Activated B cell treated with CpG ODN at 0.5 μM for 24 hours (primary cell): ENCODE measurements at regions of chr2 and their contacts with region 1.

Region 1: GRCh38 chr2:157523270-157524247 is 79.7 kb upstream of the CYTIP start:
- DNase-seq: no peak
- ATAC-seq: peak; percentile 93
- H3K4me3 Mint-ChIP-seq: peak overlapping the region; percentile 17
- H3K27ac Mint-ChIP-seq: peak overlapping the region; percentile 24
- H3K4me1 Mint-ChIP-seq: peaks cover 31% of the 10 kb centered on the region
- H3K27me3 Mint-ChIP-seq: no peaks in the 10 kb centered on the region
- CTCF ChIP-seq: no peak

Region 2: DNA sequence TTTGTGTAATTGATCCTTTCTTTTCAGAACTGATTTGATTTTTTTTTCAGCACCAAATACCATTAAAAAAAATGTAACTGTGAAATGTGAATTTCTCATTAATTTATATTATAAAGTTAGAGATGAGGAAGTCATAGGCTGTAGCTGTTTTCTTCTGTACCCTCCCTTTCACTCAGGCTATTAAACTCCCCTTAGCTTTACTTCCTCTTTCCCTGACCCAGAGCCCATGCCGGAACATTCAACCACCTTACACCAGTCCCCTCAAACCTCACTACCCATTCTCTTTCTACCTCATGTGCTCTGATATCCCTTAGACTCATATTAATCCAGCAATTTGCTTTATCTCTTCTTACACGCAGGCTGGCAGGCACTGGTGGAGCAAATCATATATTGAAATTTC is 253.6 kb before region 1 on chr2:
- CTCF ChIA-PET with region 1: no interaction called
- POLR2A ChIA-PET with region 1: no interaction called
- intact Hi-C with region 1: no loop called
- DNase-seq: no peak
- ATAC-seq: peak; percentile 45
- H3K4me3 Mint-ChIP-seq: no peak overlapping the region
- H3K27ac Mint-ChIP-seq: no peak overlapping the region
- H3K4me1 Mint-ChIP-seq: peaks cover 5% of the 10 kb centered on the region
- H3K27me3 Mint-ChIP-seq: peaks cover 1% of the 10 kb centered on the region
- CTCF ChIP-seq: no peak

Region 3: GRCh38 chr2:157363612-157364101 is 159.9 kb before region 1 on chr2:
- CTCF ChIA-PET with region 1: no interaction called
- POLR2A ChIA-PET with region 1: no interaction called
- intact Hi-C with region 1: no loop called
- DNase-seq: no peak
- ATAC-seq: peak; percentile 52
- H3K4me3 Mint-ChIP-seq: peak overlapping the region; percentile 16
- H3K27ac Mint-ChIP-seq: peak overlapping the region; percentile 57
- H3K4me1 Mint-ChIP-seq: peaks cover 33% of the 10 kb centered on the region
- H3K27me3 Mint-ChIP-seq: no peaks in the 10 kb centered on the region
- CTCF ChIP-seq: no peak

Region 4: DNA sequence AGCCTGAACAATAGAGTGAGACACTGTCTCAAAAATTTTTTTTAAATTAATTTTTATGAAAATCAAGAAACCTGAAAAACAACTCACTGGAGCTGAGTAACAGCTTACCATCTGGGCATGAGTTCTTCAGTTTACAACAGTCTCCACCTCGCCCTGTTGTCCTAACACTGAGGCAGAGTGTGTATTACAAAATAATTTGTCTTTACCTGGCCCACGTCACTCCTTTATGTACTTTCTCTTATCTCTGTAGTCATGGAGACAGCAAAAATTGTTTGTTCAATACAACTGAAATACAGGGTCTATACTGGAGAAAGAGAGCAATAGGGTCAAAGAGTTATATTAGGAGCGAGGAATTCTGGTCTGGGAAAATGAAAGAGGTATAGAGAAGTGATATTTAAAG is 127.7 kb before region 1 on chr2:
- CTCF ChIA-PET with region 1: no interaction called
- POLR2A ChIA-PET with region 1: no interaction called
- intact Hi-C with region 1: no loop called
- DNase-seq: no peak
- ATAC-seq: no peak
- H3K4me3 Mint-ChIP-seq: no peak overlapping the region
- H3K27ac Mint-ChIP-seq: no peak overlapping the region
- H3K4me1 Mint-ChIP-seq: peaks cover 3% of the 10 kb centered on the region
- H3K27me3 Mint-ChIP-seq: no peaks in the 10 kb centered on the region
- CTCF ChIP-seq: no peak

Region 5: DNA sequence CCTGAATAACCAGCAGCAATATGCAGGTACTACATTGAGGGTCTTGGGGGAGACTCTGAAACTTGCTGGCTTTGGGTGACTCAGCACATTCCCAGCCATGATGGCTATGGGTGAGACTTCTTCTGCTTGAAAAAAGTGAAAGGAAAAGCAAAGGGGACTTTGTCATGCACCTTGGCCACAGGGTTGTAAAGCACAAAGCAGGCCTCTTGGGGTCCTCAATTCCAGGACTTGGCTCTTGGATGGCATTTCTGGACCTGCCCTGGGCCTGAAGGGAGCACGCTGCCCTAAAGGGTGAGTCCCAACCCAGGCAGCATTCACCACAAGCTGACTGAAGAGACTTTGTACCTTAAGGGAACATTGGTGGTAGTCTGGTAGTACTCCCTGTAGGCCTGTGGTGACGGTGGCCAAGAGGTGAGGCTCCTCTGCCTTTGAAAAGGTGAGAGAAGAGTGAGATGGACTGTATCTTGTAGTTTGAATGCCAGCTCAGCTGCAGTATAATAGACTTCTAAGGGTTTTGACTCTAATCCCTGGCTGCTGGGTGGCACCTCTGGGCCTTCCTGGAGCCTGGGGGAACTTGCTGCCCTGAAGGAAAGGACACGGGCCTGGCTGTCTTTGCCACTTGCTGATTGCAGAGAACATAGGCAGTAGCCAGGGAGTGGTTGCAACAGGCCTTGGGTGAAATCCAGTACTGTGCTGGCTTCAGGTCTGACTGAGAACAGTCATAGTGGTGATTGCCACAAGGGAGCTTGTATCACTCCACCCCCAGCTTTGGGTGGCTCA is 43.2 kb before region 1 on chr2:
- CTCF ChIA-PET with region 1: no interaction called
- POLR2A ChIA-PET with region 1: no interaction called
- intact Hi-C with region 1: no loop called
- DNase-seq: no peak
- ATAC-seq: no peak
- H3K4me3 Mint-ChIP-seq: no peak overlapping the region
- H3K27ac Mint-ChIP-seq: peak overlapping the region; percentile 30
- H3K4me1 Mint-ChIP-seq: peaks cover 22% of the 10 kb centered on the region
- H3K27me3 Mint-ChIP-seq: no peaks in the 10 kb centered on the region
- CTCF ChIP-seq: no peak

Region 6: DNA sequence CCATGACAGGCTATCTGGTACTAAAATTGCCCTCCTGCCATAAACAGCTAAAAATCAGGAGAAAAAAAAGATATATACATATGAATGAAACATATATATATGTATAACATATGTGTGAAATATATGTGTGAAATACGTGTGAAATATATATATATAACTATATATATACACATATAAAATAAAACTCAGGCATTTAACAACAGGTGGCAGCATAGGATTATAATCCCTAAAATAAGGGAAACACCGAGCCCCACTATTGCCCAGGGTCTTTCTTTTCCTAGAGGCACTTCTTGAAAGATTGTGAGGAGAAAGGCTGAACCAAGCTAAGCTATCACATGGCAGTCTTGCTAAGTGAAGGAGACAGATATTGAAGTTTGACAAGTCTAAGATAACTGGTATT is 13.8 kb before region 1 on chr2:
- CTCF ChIA-PET with region 1: interaction called, 3 read pairs
- POLR2A ChIA-PET with region 1: no interaction called
- intact Hi-C with region 1: loop called (anchors 2 kb)
- DNase-seq: no peak
- ATAC-seq: no peak
- H3K4me3 Mint-ChIP-seq: no peak overlapping the region
- H3K27ac Mint-ChIP-seq: no peak overlapping the region
- H3K4me1 Mint-ChIP-seq: peaks cover 6% of the 10 kb centered on the region
- H3K27me3 Mint-ChIP-seq: peaks cover 10% of the 10 kb centered on the region
- CTCF ChIP-seq: no peak

Region 7: DNA sequence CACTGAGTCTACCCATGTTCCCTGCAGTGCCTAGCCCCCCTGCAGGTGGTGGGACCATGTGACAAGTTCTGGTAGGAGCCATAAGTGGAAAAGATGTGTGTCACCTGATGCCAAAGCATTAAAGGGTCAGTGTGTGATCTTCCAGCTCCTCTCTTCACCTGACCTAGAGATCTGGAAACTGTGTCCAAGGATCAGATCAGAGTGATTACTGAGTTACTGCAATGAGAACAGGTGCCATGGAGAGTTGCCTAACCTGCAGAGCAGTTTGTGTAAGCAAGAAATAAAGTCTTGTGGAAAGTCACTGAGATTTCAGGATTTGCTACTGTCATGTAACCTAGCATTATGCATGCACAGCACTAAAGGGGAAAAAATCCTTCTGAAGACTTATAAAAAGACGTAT is 14.5 kb after region 1 on chr2:
- CTCF ChIA-PET with region 1: no interaction called
- POLR2A ChIA-PET with region 1: no interaction called
- intact Hi-C with region 1: loop called (anchors 2 kb)
- DNase-seq: no peak
- ATAC-seq: no peak
- H3K4me3 Mint-ChIP-seq: no peak overlapping the region
- H3K27ac Mint-ChIP-seq: no peak overlapping the region
- H3K4me1 Mint-ChIP-seq: no peaks in the 10 kb centered on the region
- H3K27me3 Mint-ChIP-seq: no peaks in the 10 kb centered on the region
- CTCF ChIP-seq: no peak